Activated CD4-positive, alpha-beta memory T cell treated with anti-CD3 and anti-CD28 coated beads, Interleukin-2, amount 10 ng/mL, durations not matched to agents 7 days and 5 days (primary cell): ENCODE measurements at regions of chr1 and their contacts with region 1.

Region 1: GRCh38 chr1:241611063-241611462 is 29.1 kb downstream of the CHML start:
- DNase-seq: no peak
- H3K4me3 Mint-ChIP-seq: no peak overlapping the region
- H3K27ac Mint-ChIP-seq: no peak overlapping the region
- H3K4me1 Mint-ChIP-seq: peaks cover 5% of the 10 kb centered on the region
- H3K27me3 Mint-ChIP-seq: no peaks in the 10 kb centered on the region

Region 2: GRCh38 chr1:241627453-241628259 is 16.6 kb after region 1 on chr1:
- CTCF ChIA-PET with region 1: interaction called, 49 read pairs
- POLR2A ChIA-PET with region 1: interaction called, 3 read pairs
- DNase-seq: peak; percentile 39
- H3K4me3 Mint-ChIP-seq: peak overlapping the region; percentile 9
- H3K27ac Mint-ChIP-seq: peak overlapping the region; percentile 57
- H3K4me1 Mint-ChIP-seq: peaks cover 11% of the 10 kb centered on the region
- H3K27me3 Mint-ChIP-seq: no peaks in the 10 kb centered on the region

Region 3: GRCh38 chr1:241660424-241660972 is 49.4 kb after region 1 on chr1:
- CTCF ChIA-PET with region 1: no interaction called
- POLR2A ChIA-PET with region 1: no interaction called
- DNase-seq: no peak
- H3K4me3 Mint-ChIP-seq: no peak overlapping the region
- H3K27ac Mint-ChIP-seq: no peak overlapping the region
- H3K4me1 Mint-ChIP-seq: no peaks in the 10 kb centered on the region
- H3K27me3 Mint-ChIP-seq: no peaks in the 10 kb centered on the region

Region 4: DNA sequence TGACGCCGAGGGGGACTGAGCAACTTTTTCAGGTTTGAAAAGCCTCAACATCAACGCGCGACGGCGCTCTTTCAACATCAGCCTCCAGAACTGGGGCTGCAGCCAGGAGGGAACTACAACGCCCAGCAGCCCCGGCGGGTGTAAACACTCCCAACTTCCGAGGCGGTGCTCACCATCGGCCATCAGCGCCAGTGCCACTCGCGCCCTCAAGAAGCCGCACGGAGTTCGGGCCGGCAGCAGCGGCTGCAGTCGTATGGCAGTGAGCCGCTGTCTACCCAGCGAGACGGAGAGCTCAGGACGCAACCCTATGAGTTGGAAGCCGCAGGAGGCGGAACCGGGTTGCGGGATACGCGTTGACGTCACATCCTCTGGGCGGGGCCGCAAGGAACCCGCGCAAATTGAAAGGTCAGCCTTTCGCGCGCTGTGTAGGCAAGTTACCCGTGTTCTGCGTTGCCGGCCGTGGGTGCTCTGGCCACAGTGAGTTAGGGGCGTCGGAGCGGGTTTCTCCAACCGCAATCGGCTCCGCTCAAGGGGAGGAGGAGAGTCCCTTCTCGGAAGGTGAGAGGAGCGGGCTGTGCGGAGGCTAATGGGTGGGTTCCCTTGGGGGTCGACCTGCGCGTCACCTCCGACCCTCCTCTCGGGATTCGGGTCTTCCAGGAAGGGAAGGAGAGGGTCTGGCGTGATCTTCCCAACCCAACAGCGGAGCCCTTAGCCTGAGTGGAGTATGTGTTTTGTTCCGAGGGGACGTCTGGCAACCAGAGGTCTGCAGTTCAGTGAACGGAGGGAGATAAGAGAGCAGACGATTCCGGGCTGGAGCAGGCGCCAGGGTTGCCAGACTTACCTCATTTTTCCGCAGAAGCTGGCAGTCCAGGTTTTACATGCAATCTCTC is 237.0 kb after region 1 on chr1 and contains the start of gene EXO1:
- CTCF ChIA-PET with region 1: interaction called, 10 read pairs
- POLR2A ChIA-PET with region 1: interaction called, 3 read pairs
- DNase-seq: peak; percentile 91
- H3K4me3 Mint-ChIP-seq: peak within 1 kb of the TSS; percentile 92
- H3K27ac Mint-ChIP-seq: peak within 1 kb of the TSS; percentile 99
- H3K4me1 Mint-ChIP-seq: peaks cover 30% of the 10 kb centered on the region
- H3K27me3 Mint-ChIP-seq: peaks cover 3% of the 10 kb centered on the region
- total RNA-seq, gene EXO1: 30.1 to 31.9 TPM

Region 5: DNA sequence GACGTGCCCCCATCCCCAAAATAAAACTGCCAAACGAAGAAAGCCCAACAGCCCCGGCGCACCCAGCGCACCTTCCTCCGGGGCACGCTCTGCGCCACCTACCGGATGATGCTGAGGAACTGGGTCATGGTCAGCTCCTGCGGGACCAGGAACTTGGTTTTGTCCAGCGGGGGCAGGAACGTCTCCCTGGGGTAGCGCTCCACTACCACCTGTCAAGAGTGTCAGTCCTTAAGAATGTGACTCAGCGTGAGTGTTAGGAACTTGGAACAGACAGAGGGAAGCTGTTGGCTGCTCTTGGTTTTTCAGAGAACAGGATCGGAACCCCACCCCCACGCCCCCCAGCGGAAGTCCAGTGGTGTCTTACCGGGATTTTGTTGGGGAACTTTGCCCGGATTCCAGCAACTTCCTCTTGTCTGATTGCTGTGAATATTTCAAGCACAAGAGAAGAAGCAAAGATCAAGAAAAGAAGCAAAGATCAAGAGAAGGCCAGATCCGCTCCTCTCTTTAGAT is 387.4 kb after region 1 on chr1:
- CTCF ChIA-PET with region 1: interaction called, 31 read pairs
- POLR2A ChIA-PET with region 1: no interaction called
- DNase-seq: peak; percentile 54
- H3K4me3 Mint-ChIP-seq: peak overlapping the region; percentile 37
- H3K27ac Mint-ChIP-seq: no peak overlapping the region
- H3K4me1 Mint-ChIP-seq: peaks cover 6% of the 10 kb centered on the region
- H3K27me3 Mint-ChIP-seq: no peaks in the 10 kb centered on the region